ENCODE measurements at regions of chr11 and their contacts with region 1.

Region 1: GRCh38 chr11:67167086-67167485 is 48.0 kb downstream of the KDM2A start:
- DNase-seq: no peak
- H3K4me3 Mint-ChIP-seq: no peak overlapping the region
- H3K27ac Mint-ChIP-seq: no peak overlapping the region
- H3K4me1 Mint-ChIP-seq: peaks cover 15% of the 10 kb centered on the region
- H3K27me3 Mint-ChIP-seq: no peaks in the 10 kb centered on the region

Region 2: GRCh38 chr11:67082035-67082791 is 84.9 kb before region 1 on chr11:
- intact Hi-C with region 1: loop called (anchors 5 kb)
- DNase-seq: no peak
- H3K4me3 Mint-ChIP-seq: no peak overlapping the region
- H3K27ac Mint-ChIP-seq: peak overlapping the region; percentile 12
- H3K4me1 Mint-ChIP-seq: peaks cover 12% of the 10 kb centered on the region
- H3K27me3 Mint-ChIP-seq: peaks cover 2% of the 10 kb centered on the region

Region 3: DNA sequence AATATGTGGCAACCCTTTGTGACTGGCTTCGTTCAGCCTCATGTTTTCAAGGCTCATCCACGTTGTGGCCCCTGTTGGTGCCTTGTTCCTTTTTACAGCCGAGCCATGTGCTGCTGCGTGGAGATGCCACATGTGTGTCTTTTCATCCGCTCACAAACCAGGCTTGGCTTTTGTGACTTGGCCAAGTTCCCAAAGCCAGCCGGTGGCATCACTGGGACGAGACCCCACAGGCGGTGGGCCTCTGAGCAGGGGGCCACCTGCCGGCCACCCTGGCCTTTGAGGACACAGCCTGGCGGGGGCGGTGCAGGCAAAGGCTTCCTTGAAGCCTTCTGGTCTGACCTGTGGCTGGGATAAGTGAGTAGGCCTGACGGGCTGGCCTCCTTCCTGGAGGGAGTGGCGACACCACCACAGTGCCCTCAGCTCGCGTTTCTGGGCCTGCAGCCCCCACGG is 109.7 kb after region 1 on chr11:
- intact Hi-C with region 1: no loop called
- DNase-seq: peak; percentile 34
- H3K4me3 Mint-ChIP-seq: peak overlapping the region; percentile 71
- H3K27ac Mint-ChIP-seq: peak overlapping the region; percentile 98
- H3K4me1 Mint-ChIP-seq: peaks cover 48% of the 10 kb centered on the region
- H3K27me3 Mint-ChIP-seq: no peaks in the 10 kb centered on the region

Region 4: DNA sequence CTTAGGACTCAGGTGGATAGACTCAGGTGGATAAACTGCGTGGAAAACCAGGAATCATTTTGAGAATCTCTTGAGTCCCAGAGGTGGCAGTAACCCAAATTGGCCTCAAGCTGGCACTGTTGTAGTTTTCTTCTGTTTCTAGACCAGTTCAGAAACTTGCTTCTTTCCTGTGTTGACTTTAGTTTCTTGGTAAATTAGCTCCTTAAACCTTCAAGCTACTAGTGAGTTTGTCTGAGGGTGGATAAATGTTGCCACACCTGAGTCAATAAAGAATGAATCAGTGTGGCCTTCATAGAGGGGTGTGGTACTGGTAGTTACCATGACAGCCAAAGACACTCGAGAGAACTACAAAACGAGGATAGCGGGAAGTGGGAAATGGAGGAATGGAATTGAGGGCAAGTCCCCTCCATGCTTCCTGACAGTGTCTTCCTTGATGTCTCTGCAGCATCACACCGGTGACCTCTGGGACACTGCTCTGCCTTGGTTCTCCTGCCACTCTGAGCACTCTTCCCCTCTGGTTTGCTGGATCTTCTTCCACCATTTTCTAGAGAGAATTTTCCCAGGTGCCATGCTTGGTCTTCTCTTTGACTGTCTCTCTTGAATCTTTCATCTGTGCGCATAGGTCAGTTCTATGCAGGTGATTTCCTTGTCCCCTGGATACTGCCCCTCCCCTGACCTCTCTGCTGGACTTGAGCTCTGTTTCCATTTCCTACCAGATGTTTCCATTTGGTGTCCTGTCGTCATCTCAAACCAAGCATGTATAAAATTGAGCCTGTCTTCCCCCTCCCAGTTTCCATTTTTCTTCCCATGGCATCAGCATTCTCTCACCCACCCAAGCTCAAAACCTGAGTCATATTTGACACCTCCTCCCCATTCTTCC is 179.1 kb after region 1 on chr11:
- intact Hi-C with region 1: no loop called
- DNase-seq: no peak
- H3K4me3 Mint-ChIP-seq: no peak overlapping the region
- H3K27ac Mint-ChIP-seq: peak overlapping the region; percentile 2
- H3K4me1 Mint-ChIP-seq: peaks cover 23% of the 10 kb centered on the region
- H3K27me3 Mint-ChIP-seq: no peaks in the 10 kb centered on the region

Measured in activated T-helper 2 cell treated with anti-CD3 and anti-CD28 coated beads, Interferon-gamma antibody, Interleukin-2, Interleukin-4, amounts not matched to agents 10 μg/mL and 5 μg/mL and 100 μg/mL, durations not matched to agents 14 hours and 24 hours and 36 hours (primary cell).